CD14-positive monocyte (primary cell): ENCODE measurements at regions of chr1 and their contacts with region 1.

Region 1: DNA sequence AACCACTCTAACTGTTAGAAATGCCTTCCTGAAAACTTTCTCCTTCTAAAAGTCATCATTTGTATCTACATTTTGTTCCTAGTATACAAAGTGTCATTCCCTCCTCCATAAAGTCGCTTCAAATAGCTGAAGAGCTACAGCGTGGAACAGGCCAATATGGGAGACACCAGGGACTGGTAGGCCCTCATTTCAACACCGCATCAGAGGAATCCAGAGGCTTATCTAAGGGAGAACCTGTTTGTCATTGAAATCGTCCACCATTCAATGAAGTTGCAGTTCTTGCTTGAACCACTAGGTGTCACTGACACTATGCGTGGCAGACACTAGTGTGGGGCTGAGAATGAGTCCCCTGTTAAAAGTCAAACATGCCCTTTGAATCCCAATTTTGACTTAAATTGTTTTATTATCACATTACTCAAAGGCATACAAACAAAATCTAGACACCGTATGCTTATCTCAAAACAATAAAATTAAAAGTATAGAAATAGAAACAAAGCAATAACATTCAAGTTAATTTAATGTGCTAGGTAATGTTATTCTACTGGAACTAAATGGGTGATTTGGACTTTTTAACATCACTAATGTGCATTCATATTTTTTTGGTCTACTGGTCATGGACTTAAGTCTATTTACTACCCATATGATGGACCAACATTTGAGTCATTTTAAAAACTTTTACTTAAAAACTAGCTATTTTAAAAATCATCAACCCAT is 182.3 kb downstream of the FCRL5 start:
- DNase-seq: peak; percentile 25 to 53 (median 47)
- H3K4me3 ChIP-seq: no peak overlapping the region
- H3K4me3 Mint-ChIP-seq: no peak overlapping the region
- H3K27ac ChIP-seq: no peak overlapping the region
- H3K27ac Mint-ChIP-seq: peak overlapping the region in 1 of 7 donors; percentile 7
- H3K4me1 ChIP-seq: no peaks in the 10 kb centered on the region
- H3K4me1 Mint-ChIP-seq: peaks cover 16% of the 10 kb centered on the region
- H3K27me3 ChIP-seq: no peaks in the 10 kb centered on the region
- H3K27me3 Mint-ChIP-seq: peaks cover 0 to 7% (median 5%) of the 10 kb centered on the region in 3 donors
- CTCF ChIP-seq: peak; percentile 96

Region 2: DNA sequence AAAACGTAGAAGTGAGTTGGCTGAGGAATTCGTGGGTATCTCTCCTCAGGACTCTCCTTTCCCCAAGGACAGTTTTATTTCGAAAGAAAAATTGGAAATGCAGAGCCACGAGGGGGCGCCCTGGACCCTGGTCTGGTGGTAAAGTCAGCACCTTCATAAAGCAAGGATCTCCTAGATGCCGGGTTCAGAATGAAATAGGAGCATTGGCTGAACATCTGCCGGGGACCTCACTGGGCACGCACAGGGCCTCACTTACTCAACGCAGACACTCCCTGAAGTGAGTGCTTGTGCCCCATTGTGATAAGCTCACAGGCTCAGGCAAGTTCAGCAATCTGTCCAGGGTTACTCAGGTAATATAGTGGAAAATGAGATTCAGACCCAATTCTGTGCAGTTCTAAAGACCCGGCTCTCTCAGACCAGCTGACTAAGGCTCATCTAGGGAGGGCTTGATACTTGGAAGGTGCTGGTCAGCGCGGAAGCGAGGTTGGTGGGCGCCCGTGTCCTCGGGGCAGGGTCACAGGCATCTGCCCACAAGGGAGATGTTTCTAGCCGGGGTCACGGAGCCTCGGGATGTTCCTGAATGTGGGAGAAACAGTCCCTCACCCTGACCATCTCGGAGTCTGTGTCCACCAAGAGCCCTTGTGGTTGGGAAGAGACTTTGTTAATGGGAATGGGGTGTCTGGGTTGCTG is 176.1 kb before region 1 on chr1:
- intact Hi-C with region 1: loop called in 1 of 2 experiments (anchors 10 kb)
- DNase-seq: peak; percentile 20 to 36 (median 24)
- H3K4me3 ChIP-seq: no peak overlapping the region
- H3K4me3 Mint-ChIP-seq: peak overlapping the region in 1 of 2 donors; percentile 69
- H3K27ac ChIP-seq: no peak overlapping the region
- H3K27ac Mint-ChIP-seq: peak overlapping the region in 1 of 7 donors; percentile 50
- H3K4me1 ChIP-seq: peaks cover 0 to 4% of the 10 kb centered on the region in 2 donors
- H3K4me1 Mint-ChIP-seq: peaks cover 6% of the 10 kb centered on the region
- H3K27me3 ChIP-seq: peaks cover 27 to 32% of the 10 kb centered on the region in 2 donors
- H3K27me3 Mint-ChIP-seq: peaks cover 27 to 44% (median 29%) of the 10 kb centered on the region in 3 donors
- CTCF ChIP-seq: peak; percentile 73

Region 3: GRCh38 chr1:157325220-157325619 is 44.7 kb before region 1 on chr1:
- intact Hi-C with region 1: no loop called
- DNase-seq: no peak
- H3K4me3 ChIP-seq: no peak overlapping the region
- H3K4me3 Mint-ChIP-seq: no peak overlapping the region
- H3K27ac ChIP-seq: no peak overlapping the region
- H3K27ac Mint-ChIP-seq: no peak overlapping the region
- H3K4me1 ChIP-seq: no peaks in the 10 kb centered on the region
- H3K4me1 Mint-ChIP-seq: no peaks in the 10 kb centered on the region
- H3K27me3 ChIP-seq: no peaks in the 10 kb centered on the region
- H3K27me3 Mint-ChIP-seq: peaks cover under 1 to 11% (median 10%) of the 10 kb centered on the region in 3 donors
- CTCF ChIP-seq: no peak